Vagina (tissue), 2 donors: ENCODE measurements at regions of chr7 and their contacts with region 1.

Region 1: DNA sequence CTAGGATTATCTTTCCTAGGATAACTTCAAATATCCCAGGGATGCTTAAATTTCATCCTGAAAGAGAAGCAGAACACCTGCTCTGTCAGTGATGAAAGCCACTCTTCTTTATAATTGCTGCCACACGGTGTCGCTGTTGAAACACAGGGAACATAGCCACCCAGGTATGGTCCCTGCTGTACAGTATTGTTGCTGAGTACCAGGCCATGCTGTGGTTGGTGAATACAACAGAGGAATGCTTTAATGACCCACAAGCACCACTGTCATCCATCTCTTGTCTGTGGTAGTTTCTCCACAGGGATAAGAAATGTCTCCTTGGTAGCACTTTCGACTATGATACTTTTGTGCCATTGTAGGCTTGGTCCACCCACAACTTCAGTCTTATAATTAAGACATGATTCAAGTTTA is 70.6 kb upstream of the STARD3NL start:
- DNase-seq: no peak
- H3K4me3 ChIP-seq: no peak overlapping the region
- H3K27ac ChIP-seq: no peak overlapping the region
- H3K4me1 ChIP-seq: no peaks in the 10 kb centered on the region
- H3K27me3 ChIP-seq: no peaks in the 10 kb centered on the region
- CTCF ChIP-seq: peak; percentile 62 to 80 (median 79)
- POLR2A ChIP-seq: no peak

Region 2: GRCh38 chr7:38057829-38058228 is 49.7 kb before region 1 on chr7:
- intact Hi-C with region 1: no loop called
- DNase-seq: no peak
- H3K4me3 ChIP-seq: no peak overlapping the region
- H3K27ac ChIP-seq: no peak overlapping the region
- H3K4me1 ChIP-seq: no peaks in the 10 kb centered on the region
- H3K27me3 ChIP-seq: no peaks in the 10 kb centered on the region
- CTCF ChIP-seq: no peak
- POLR2A ChIP-seq: no peak

Region 3: GRCh38 chr7:38222481-38223096 is 115.1 kb after region 1 on chr7:
- intact Hi-C with region 1: loop called (anchors 5 kb)
- DNase-seq: no peak
- H3K4me3 ChIP-seq: no peak overlapping the region
- H3K27ac ChIP-seq: no peak overlapping the region
- H3K4me1 ChIP-seq: no peaks in the 10 kb centered on the region
- H3K27me3 ChIP-seq: no peaks in the 10 kb centered on the region
- CTCF ChIP-seq: peak; percentile 73 to 92 (median 91)
- POLR2A ChIP-seq: no peak